ENCODE measurements at regions of chr1 and their contacts with region 1.

Region 1: GRCh38 chr1:154558575-154559465 is at the start of gene UBE2Q1:
- DNase-seq: peak; percentile 99
- H3K4me3 Mint-ChIP-seq: peak within 1 kb of the TSS; percentile 91
- H3K27ac Mint-ChIP-seq: peak within 1 kb of the TSS; percentile 92
- H3K4me1 Mint-ChIP-seq: peaks cover 28% of the 10 kb centered on the region
- H3K27me3 Mint-ChIP-seq: no peaks in the 10 kb centered on the region
- total RNA-seq, gene UBE2Q1: 79.2 to 84.6 TPM

Region 2: DNA sequence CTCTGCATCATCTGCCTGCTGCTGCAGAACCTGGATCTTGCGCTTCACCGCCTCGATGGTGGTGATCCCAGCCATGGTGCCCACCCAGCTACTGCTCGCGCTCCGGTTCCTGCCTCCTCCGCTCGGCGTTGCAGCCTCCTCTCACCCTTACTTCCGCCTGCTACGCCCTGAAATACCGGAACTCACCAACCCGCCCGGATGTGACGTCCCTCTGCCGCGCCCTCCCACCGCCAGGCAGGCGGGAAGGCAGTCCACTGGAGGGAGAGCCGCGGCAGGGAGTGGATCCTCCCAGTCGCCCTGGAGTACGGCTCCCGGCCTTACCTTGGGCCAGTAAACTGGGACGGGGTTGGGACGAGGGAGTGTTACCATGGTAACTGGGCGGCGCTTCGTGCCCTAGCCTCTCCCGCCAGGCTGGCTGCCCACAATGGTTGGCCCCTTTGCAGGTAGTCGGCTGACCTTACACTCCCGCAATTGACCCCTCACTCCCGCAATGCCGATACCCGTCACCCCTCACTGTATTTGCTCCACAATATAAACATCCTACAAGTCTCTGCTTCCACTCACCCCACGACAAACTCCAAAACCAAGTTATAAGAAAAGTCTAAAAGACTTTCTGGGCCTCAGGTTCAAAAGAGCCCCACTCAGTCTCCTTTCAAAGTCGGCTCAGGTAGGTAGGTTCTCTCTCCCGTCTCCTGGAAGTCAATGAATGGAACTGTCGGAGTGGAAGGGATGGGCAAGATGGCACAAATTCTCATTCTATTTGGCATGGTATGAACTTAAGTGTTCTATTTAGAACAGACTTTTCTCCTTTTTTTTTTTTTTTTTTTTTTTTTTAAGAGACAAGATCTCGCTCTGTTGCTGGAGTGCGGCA is 375.5 kb before region 1 on chr1:
- CTCF ChIA-PET with region 1: no interaction called
- intact Hi-C with region 1: loop called (anchors 5 kb)
- DNase-seq: peak; percentile 98
- H3K4me3 Mint-ChIP-seq: peak overlapping the region; percentile 100
- H3K27ac Mint-ChIP-seq: peak overlapping the region; percentile 99
- H3K4me1 Mint-ChIP-seq: peaks cover 38% of the 10 kb centered on the region
- H3K27me3 Mint-ChIP-seq: no peaks in the 10 kb centered on the region

Region 3: GRCh38 chr1:154607609-154608396 is 49.0 kb after region 1 on chr1 and contains the start of gene ADAR:
- CTCF ChIA-PET with region 1: interaction called, 13 read pairs
- intact Hi-C with region 1: loop called (anchors 1 kb)
- DNase-seq: peak; percentile 97
- H3K4me3 Mint-ChIP-seq: peak within 1 kb of the TSS; percentile 91
- H3K27ac Mint-ChIP-seq: peak within 1 kb of the TSS; percentile 96
- H3K4me1 Mint-ChIP-seq: peaks cover 75% of the 10 kb centered on the region
- H3K27me3 Mint-ChIP-seq: no peaks in the 10 kb centered on the region
- total RNA-seq, gene ADAR: 301 to 313 TPM

Region 4: GRCh38 chr1:154747740-154748404 is 189.1 kb after region 1 on chr1:
- CTCF ChIA-PET with region 1: interaction called, 18 read pairs
- intact Hi-C with region 1: loop called (anchors 1 kb)
- DNase-seq: peak; percentile 80
- H3K4me3 Mint-ChIP-seq: peak overlapping the region; percentile 80
- H3K27ac Mint-ChIP-seq: peak overlapping the region; percentile 96
- H3K4me1 Mint-ChIP-seq: peaks cover 80% of the 10 kb centered on the region
- H3K27me3 Mint-ChIP-seq: no peaks in the 10 kb centered on the region

Region 5: GRCh38 chr1:154849645-154850131 is 290.9 kb after region 1 on chr1:
- CTCF ChIA-PET with region 1: no interaction called
- intact Hi-C with region 1: loop called (anchors 1 kb)
- DNase-seq: peak; percentile 83
- H3K4me3 Mint-ChIP-seq: no peak overlapping the region
- H3K27ac Mint-ChIP-seq: peak overlapping the region; percentile 66
- H3K4me1 Mint-ChIP-seq: peaks cover 17% of the 10 kb centered on the region
- H3K27me3 Mint-ChIP-seq: peaks cover 5% of the 10 kb centered on the region

Region 6: GRCh38 chr1:154936555-154937084 is 377.8 kb after region 1 on chr1 and contains the start of gene PMVK:
- CTCF ChIA-PET with region 1: interaction called, 3 read pairs
- intact Hi-C with region 1: loop called (anchors 1 kb)
- DNase-seq: peak; percentile 97
- H3K4me3 Mint-ChIP-seq: peak within 1 kb of the TSS; percentile 83
- H3K27ac Mint-ChIP-seq: peak within 1 kb of the TSS; percentile 97
- H3K4me1 Mint-ChIP-seq: peaks cover 47% of the 10 kb centered on the region
- H3K27me3 Mint-ChIP-seq: no peaks in the 10 kb centered on the region
- total RNA-seq, gene PMVK: 29.8 to 30.5 TPM

Region 7: GRCh38 chr1:155135415-155136028 is 576.7 kb after region 1 on chr1 and contains the start of gene SLC50A1:
- CTCF ChIA-PET with region 1: no interaction called
- intact Hi-C with region 1: loop called (anchors 1 kb)
- DNase-seq: peak; percentile 96
- H3K4me3 Mint-ChIP-seq: peak within 1 kb of the TSS; percentile 99
- H3K27ac Mint-ChIP-seq: peak within 1 kb of the TSS; percentile 100
- H3K4me1 Mint-ChIP-seq: peaks cover 32% of the 10 kb centered on the region
- H3K27me3 Mint-ChIP-seq: no peaks in the 10 kb centered on the region
- total RNA-seq, gene SLC50A1: 48.4 to 52.7 TPM

Measured in activated naive CD4-positive, alpha-beta T cell treated with anti-CD3 and anti-CD28 coated beads for 36 hours (primary cell).